H1 (cell line): ENCODE measurements at regions of chr9 and their contacts with region 1.

Region 1: DNA sequence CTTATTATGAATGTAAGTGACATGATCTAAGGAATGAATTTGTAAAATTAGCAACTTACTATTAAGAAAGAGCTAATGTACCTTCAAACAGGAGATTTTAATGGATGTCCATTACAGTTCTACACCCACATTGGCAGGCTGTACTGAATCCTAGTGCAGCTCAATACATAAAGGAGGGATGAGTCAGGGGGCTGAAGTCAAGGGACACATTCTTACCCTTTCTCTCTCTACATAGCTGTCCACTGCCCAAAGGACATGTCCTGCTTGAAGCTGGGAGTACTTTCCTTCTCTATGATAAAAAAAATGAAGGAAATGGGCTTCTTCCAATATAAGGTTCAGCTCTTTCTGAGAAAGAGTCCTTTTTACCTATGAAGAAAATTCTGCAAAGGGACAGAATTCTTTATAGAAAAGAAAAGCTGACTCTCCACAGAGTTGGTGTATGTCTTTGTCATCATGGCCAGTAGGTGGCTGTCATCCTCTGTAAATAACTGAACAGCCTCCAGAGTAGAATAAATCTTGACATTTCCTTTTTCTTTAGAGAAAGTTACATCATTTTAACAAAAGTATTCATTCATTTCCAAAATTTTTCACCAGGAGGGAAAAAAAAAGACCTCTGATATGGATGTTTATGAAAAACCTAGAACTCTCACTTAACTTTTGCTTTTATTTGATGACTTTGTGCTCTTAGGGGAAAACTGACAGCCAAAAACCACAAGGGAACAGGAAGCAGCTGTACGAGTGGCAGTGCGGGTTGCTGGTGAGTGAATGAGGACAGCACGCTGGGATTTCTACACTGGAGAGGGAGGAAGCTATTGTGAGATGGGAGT is 13.1 kb upstream of the IFNA14 start:
- DNase-seq: no peak
- H3K4me3 ChIP-seq: no peak overlapping the region
- H3K27ac ChIP-seq: no peak overlapping the region
- H3K4me1 ChIP-seq: peaks cover 0 to 7% (median 3%) of the 10 kb centered on the region in 4 experiments; a peak in 3 of 7 replicates
- H3K27me3 ChIP-seq: no peaks in the 10 kb centered on the region; a peak in 1 of 7 replicates
- CTCF ChIP-seq: peak in 2 of 3 experiments; percentile 33 to 56; a peak in 2 of 4 replicates
- EP300 ChIP-seq: no peak
- POLR2A ChIP-seq: no peak
- RAD21 ChIP-seq: peak; percentile 59 to 62

Region 2: DNA sequence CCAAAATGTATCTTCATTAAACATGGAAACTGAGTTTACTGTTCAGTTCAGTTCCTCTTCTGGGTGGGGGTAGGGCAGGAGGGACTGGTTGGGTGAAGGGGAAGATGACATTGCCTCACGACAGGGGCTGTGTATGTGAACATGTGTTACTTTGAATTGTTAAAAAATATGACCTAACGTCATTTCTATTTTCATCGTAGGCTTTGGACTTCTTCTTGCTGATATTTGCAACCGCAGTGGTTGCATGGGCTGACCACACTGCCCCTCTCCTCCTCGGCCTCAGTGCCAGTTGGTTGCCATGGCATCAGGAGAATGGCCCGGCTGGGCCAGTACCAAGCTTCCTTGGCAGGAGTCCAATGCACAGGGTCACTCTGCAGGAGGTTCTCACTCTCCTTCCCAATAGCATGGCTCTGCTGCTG is 263.0 kb before region 1 on chr9:
- CTCF ChIA-PET with region 1: no interaction called
- POLR2A ChIA-PET with region 1: no interaction called
- DNase-seq: no peak
- H3K4me3 ChIP-seq: no peak overlapping the region
- H3K27ac ChIP-seq: no peak overlapping the region
- H3K4me1 ChIP-seq: peaks cover 0 to 2% (median 0%) of the 10 kb centered on the region in 4 experiments; a peak in 1 of 7 replicates
- H3K27me3 ChIP-seq: no peaks in the 10 kb centered on the region
- CTCF ChIP-seq: no peak
- EP300 ChIP-seq: no peak
- POLR2A ChIP-seq: no peak
- RAD21 ChIP-seq: no peak

Region 3: DNA sequence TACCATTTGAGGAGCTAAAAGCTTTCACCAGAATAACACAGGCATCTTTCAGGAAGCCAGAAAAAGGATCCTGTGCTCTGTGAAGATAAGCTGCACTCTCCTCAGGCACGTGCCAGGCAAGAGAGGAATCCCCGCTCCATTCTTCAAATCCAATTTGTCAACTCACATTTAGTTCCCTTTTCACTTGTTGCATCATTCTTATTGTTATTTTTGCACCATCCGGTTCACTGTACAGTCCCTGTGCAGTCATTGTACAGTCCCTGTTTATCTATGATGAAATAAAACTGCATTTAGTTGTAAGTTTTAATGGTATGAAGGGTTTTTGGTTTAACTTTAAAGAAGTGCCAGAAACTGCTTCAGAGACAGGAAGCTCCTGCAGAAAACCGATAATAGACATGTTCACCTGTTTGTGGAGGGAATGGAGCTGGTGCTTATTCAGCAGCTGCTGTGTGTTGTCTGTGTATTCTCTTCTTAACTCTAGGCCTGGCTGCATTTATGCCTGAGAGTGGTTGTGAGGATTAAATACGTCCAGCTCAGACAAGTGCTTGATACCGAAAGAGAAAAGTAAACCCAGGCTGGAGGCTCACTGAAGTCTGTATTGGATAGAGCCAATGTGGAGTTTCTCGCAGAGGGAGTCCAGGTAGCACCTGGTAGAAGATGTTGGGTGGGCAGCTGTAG is 133.7 kb before region 1 on chr9:
- CTCF ChIA-PET with region 1: no interaction called
- POLR2A ChIA-PET with region 1: no interaction called
- DNase-seq: no peak
- H3K4me3 ChIP-seq: no peak overlapping the region
- H3K27ac ChIP-seq: no peak overlapping the region
- H3K4me1 ChIP-seq: no peaks in the 10 kb centered on the region
- H3K27me3 ChIP-seq: no peaks in the 10 kb centered on the region; a peak in 1 of 7 replicates
- CTCF ChIP-seq: no peak
- EP300 ChIP-seq: no peak
- POLR2A ChIP-seq: no peak
- RAD21 ChIP-seq: no peak

Region 4: GRCh38 chr9:21210311-21210710 is 42.6 kb before region 1 on chr9:
- CTCF ChIA-PET with region 1: interaction called, 10 read pairs
- POLR2A ChIA-PET with region 1: no interaction called
- DNase-seq: no peak
- H3K4me3 ChIP-seq: no peak overlapping the region
- H3K27ac ChIP-seq: no peak overlapping the region
- H3K4me1 ChIP-seq: no peaks in the 10 kb centered on the region
- H3K27me3 ChIP-seq: no peaks in the 10 kb centered on the region
- CTCF ChIP-seq: no peak
- EP300 ChIP-seq: no peak
- POLR2A ChIP-seq: no peak
- RAD21 ChIP-seq: no peak

Region 5: GRCh38 chr9:21234153-21234687 is 18.7 kb before region 1 on chr9:
- CTCF ChIA-PET with region 1: interaction called, 31 read pairs
- POLR2A ChIA-PET with region 1: no interaction called
- DNase-seq: no peak
- H3K4me3 ChIP-seq: no peak overlapping the region
- H3K27ac ChIP-seq: no peak overlapping the region
- H3K4me1 ChIP-seq: no peaks in the 10 kb centered on the region
- H3K27me3 ChIP-seq: no peaks in the 10 kb centered on the region
- CTCF ChIP-seq: no peak
- EP300 ChIP-seq: no peak
- POLR2A ChIP-seq: no peak
- RAD21 ChIP-seq: no peak

Region 6: GRCh38 chr9:21267485-21268346 is 14.8 kb after region 1 on chr9:
- CTCF ChIA-PET with region 1: interaction called, 53 read pairs
- POLR2A ChIA-PET with region 1: no interaction called
- DNase-seq: no peak
- H3K4me3 ChIP-seq: no peak overlapping the region
- H3K27ac ChIP-seq: no peak overlapping the region
- H3K4me1 ChIP-seq: no peaks in the 10 kb centered on the region
- H3K27me3 ChIP-seq: peaks cover 22 to 56% (median 42%) of the 10 kb centered on the region in 4 experiments
- CTCF ChIP-seq: no peak
- EP300 ChIP-seq: no peak
- POLR2A ChIP-seq: no peak
- RAD21 ChIP-seq: no peak

Region 7: DNA sequence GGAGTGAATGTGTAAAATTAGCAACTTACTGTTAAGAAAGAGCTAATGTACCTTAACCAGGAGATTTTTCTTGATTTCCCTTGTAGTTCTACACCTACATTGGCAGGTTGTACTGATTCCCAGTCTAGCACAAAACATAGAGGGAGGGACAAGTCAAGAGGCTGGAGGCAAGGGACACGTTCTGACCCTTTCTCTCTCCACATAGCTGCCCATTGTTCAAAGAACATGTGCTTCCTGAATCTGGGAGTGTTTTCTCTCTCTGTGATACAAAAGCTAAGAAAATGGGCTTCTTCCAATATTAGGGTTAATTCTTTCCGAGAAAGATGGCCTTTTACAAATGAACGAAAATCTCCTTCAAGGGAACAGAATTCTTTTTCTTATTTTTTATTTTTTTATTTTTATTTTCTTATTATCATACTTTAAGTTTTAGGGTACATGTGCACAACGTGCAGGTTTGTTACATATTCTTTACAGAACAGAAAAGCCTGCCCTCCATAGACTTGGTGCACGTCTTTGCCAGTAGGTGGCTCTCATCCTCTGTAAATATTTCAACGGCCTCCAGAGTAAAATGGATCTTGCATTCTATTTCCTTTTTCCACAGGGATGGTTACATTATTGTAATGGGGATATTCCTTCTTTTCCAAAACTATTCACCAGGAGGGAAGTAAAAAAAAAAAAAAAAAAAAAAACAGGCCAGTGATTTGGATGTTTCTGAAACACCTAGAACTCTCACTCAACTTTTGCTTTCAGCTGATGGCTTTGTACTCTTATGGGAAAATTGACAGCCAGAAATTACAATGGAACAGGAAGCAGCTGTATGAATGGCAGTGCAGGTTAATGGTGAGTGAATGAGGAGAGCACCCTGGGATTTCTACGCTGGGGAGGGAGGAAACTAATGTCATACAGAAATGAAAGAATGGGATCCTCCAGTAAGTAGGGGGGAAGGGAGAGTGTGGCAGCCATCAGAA is 65.3 kb after region 1 on chr9:
- CTCF ChIA-PET with region 1: interaction called, 17 read pairs
- POLR2A ChIA-PET with region 1: no interaction called
- DNase-seq: no peak
- H3K4me3 ChIP-seq: no peak overlapping the region
- H3K27ac ChIP-seq: no peak overlapping the region
- H3K4me1 ChIP-seq: no peaks in the 10 kb centered on the region
- H3K27me3 ChIP-seq: no peaks in the 10 kb centered on the region
- CTCF ChIP-seq: peak in 2 of 3 experiments; percentile 60 to 64; a peak in 3 of 4 replicates
- EP300 ChIP-seq: no peak
- POLR2A ChIP-seq: no peak
- RAD21 ChIP-seq: peak; percentile 65 to 75

Region 8: DNA sequence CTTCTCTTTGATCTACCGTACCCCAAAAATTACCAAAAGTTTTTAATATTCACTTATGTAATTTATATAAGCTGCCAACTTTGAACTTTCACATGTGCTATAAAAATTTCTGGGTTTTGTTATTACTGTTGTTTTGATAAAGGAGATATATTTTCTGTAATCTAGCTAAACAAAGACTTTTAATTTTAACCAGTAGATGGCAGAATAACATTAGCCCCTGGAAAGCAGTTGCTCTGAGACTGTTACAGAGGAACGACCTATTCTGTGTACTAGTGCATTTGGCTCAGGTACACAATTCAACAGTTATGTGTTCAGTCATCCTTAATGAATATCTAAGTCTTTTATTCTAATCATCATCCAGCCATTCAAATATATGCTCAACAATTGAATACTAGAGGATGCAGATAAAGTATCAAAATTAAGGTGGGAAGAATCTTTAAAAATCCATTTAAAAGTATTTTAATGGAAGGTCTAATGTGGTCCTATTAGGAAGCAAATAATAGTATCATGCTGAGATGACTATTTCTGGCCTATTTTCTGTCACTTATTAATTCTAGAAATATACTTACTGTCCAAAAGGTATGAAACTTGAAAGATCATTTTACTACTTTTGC is 73.7 kb after region 1 on chr9:
- CTCF ChIA-PET with region 1: interaction called, 19 read pairs
- POLR2A ChIA-PET with region 1: no interaction called
- DNase-seq: no peak
- H3K4me3 ChIP-seq: no peak overlapping the region
- H3K27ac ChIP-seq: no peak overlapping the region
- H3K4me1 ChIP-seq: no peaks in the 10 kb centered on the region
- H3K27me3 ChIP-seq: no peaks in the 10 kb centered on the region
- CTCF ChIP-seq: peak in 2 of 3 experiments; percentile 53 to 62; a peak in 2 of 4 replicates
- EP300 ChIP-seq: no peak
- POLR2A ChIP-seq: no peak
- RAD21 ChIP-seq: peak; percentile 84 to 87

Region 9: GRCh38 chr9:21455320-21455719 is 202.4 kb after region 1 on chr9:
- CTCF ChIA-PET with region 1: interaction called, 27 read pairs
- POLR2A ChIA-PET with region 1: no interaction called
- DNase-seq: no peak
- H3K4me3 ChIP-seq: no peak overlapping the region
- H3K27ac ChIP-seq: no peak overlapping the region
- H3K4me1 ChIP-seq: no peaks in the 10 kb centered on the region
- H3K27me3 ChIP-seq: no peaks in the 10 kb centered on the region
- CTCF ChIP-seq: peak; percentile 69 to 88 (median 81)
- EP300 ChIP-seq: no peak
- POLR2A ChIP-seq: no peak
- RAD21 ChIP-seq: peak; percentile 83 to 92